ENCODE measurements at regions of chr5 and their contacts with region 1.

Region 1: DNA sequence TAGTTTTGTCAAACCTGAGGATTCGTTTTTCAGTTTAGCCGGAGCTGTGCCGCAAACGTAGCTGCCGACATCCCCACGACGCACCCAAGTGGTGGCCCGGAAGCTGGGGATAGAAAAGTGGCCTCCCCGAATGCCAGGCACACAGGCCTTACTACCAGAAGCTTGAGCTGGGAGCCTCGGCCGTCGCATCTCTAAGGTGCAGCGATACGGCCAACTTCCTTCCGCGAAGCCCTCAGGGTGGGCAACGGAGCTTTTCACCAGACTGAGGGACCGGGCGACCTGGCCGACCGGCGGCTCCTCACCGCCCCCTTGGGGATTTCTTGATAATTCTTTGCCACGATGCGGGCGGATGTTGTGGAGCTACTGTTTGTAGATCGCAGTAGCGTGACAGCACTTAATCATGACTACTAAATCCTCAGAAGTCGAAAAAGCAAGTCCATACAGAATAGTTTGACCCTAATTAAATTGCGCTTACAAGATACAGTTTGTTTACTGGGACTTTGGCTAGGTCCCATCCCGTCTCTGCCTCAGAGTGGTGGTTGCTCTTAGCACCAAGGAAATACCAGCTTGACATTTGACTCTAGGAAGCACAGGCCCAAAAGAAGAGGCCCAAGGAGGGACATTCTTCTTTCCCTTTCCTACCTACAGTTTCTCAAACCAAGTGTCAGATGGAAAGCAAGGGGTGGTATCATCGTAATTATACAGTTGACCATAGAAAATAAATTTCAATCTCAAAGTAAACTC is 613 bp upstream of the TMEM267 start:
- DNase-seq: peak; percentile 70 to 91 (median 83)
- H3K4me3 ChIP-seq: peak overlapping the region; percentile 61
- H3K4me3 Mint-ChIP-seq: peak overlapping the region; percentile 94 to 99 (median 98)
- H3K27ac ChIP-seq: peak overlapping the region; percentile 96
- H3K27ac Mint-ChIP-seq: peak overlapping the region; percentile 99 to 100 (median 100)
- H3K4me1 ChIP-seq: peaks cover 32% of the 10 kb centered on the region
- H3K4me1 Mint-ChIP-seq: peaks cover 31 to 53% (median 50%) of the 10 kb centered on the region in 3 donors
- H3K27me3 ChIP-seq: no peaks in the 10 kb centered on the region
- H3K27me3 Mint-ChIP-seq: no peaks in the 10 kb centered on the region

Region 2: DNA sequence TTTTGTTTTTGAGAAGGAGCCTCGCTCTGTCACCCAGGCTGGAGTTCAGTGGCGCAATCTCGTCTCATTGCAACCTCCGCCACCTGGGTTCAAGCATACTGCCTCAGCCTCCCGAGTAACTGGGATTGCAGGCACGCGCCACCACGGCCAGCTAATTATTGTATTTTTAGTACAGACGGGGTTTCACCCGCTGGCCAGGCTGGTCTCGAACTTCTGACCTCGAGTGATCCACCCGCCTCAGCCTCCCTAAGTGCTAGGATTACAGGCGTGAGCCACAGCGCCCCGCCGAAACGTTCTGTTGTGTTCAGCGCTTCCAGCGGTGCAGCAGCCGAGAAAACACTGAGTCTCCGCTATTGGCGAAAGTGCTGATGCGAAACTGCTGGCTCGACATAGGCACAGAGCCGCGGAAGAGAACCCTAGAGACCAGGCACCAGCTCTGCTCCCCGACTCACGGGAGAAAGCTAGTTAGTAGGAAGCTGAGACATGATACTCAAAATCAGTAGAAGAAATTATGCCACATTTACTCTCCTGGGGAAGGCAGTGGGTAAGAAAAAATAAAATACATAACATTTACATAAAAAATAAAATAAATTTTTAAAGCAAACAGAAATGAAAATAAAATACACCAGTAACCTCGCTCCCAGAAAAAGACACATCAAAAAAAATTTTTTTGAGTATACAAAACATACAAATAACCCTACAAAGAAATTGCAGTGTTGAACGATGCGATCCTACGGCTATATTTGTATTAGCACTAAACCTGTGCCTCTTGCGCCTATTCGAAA is 475.7 kb before region 1 on chr5:
- CTCF ChIA-PET with region 1: interaction called, 5 read pairs
- POLR2A ChIA-PET with region 1: interaction called, 14 read pairs
- DNase-seq: peak; percentile 84 to 95 (median 89)
- H3K4me3 ChIP-seq: peak overlapping the region; percentile 79
- H3K4me3 Mint-ChIP-seq: peak overlapping the region; percentile 85 to 98 (median 93)
- H3K27ac ChIP-seq: peak overlapping the region; percentile 80
- H3K27ac Mint-ChIP-seq: peak overlapping the region; percentile 97 to 100 (median 99)
- H3K4me1 ChIP-seq: peaks cover 26% of the 10 kb centered on the region
- H3K4me1 Mint-ChIP-seq: peaks cover 36 to 40% (median 39%) of the 10 kb centered on the region in 3 donors
- H3K27me3 ChIP-seq: no peaks in the 10 kb centered on the region
- H3K27me3 Mint-ChIP-seq: peaks cover 0 to 6% of the 10 kb centered on the region in 2 donors

Region 3: DNA sequence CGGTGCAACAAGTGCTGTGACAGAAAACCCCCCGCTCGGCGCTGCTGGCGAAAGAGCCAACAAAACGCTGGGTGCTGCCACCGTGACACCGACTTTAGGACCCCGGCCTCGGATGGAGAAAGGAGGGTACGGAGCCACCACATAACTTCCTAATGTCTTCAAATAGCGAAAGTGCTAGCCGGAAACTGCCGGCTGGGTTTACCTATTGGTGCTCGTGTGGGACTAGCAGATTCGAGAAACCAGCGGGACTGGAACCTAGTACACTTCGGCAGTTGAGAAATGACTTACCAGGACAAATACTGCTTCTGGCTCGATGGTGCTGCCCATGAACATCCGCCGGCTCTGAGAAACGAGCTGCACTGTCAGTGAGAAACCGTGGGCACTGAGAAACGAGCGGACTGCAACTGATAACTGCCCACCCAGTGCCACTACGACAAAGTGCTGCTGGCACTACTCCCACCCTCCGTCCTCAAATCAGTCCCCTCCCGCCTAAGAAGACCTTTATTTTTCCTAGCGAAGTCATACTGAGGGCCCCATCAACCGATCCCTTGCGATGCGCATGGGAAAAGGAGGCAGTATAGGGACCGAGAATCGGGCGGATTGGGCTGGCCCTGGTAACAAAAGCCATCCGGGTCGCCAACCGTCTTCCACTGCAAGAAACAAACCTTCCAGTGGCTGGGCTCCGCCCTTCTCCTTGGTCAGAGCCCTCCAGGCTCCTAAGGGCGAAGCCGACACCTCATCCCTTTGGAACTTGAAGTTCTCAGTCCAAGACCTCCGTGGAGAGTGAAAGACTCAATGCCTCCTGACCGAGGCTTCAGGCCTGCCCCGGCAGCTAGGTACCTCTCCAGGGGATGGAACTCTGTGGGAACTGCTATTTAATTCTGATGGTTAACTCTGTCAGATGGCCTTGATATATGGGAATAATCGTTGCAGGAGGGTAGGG is 417.2 kb before region 1 on chr5:
- CTCF ChIA-PET with region 1: no interaction called
- POLR2A ChIA-PET with region 1: interaction called, 13 read pairs
- DNase-seq: peak; percentile 75 to 92 (median 87)
- H3K4me3 ChIP-seq: peak overlapping the region; percentile 99
- H3K4me3 Mint-ChIP-seq: peak overlapping the region; percentile 91 to 99 (median 98)
- H3K27ac ChIP-seq: peak overlapping the region; percentile 99
- H3K27ac Mint-ChIP-seq: peak overlapping the region; percentile 96 to 100 (median 99)
- H3K4me1 ChIP-seq: peaks cover 31% of the 10 kb centered on the region
- H3K4me1 Mint-ChIP-seq: peaks cover 42 to 59% (median 52%) of the 10 kb centered on the region in 3 donors
- H3K27me3 ChIP-seq: no peaks in the 10 kb centered on the region
- H3K27me3 Mint-ChIP-seq: no peaks in the 10 kb centered on the region

Region 4: GRCh38 chr5:43389679-43390329 is 94.5 kb before region 1 on chr5:
- CTCF ChIA-PET with region 1: interaction called, 12 read pairs
- POLR2A ChIA-PET with region 1: interaction called, 12 read pairs
- DNase-seq: peak; percentile 5 to 57 (median 40)
- H3K4me3 ChIP-seq: no peak overlapping the region
- H3K4me3 Mint-ChIP-seq: no peak overlapping the region
- H3K27ac ChIP-seq: no peak overlapping the region
- H3K27ac Mint-ChIP-seq: peak overlapping the region in 4 of 8 donors; percentile 20 to 48 (median 32)
- H3K4me1 ChIP-seq: no peaks in the 10 kb centered on the region
- H3K4me1 Mint-ChIP-seq: peaks cover 16 to 33% (median 29%) of the 10 kb centered on the region in 3 donors
- H3K27me3 ChIP-seq: no peaks in the 10 kb centered on the region
- H3K27me3 Mint-ChIP-seq: peaks cover 0 to 2% of the 10 kb centered on the region in 2 donors

Region 5: GRCh38 chr5:43556857-43557542 is 72.7 kb after region 1 on chr5 and contains the start of gene PAIP1:
- CTCF ChIA-PET with region 1: interaction called, 10 read pairs
- POLR2A ChIA-PET with region 1: interaction called, 49 read pairs
- DNase-seq: peak; percentile 73 to 90 (median 86)
- H3K4me3 ChIP-seq: peak within 1 kb of the TSS; percentile 63
- H3K4me3 Mint-ChIP-seq: peak within 1 kb of the TSS; percentile 91 to 96 (median 95)
- H3K27ac ChIP-seq: peak within 1 kb of the TSS; percentile 81
- H3K27ac Mint-ChIP-seq: peak within 1 kb of the TSS; percentile 97 to 99 (median 98)
- H3K4me1 ChIP-seq: peaks cover 40% of the 10 kb centered on the region
- H3K4me1 Mint-ChIP-seq: peaks cover 10 to 20% (median 12%) of the 10 kb centered on the region in 3 donors
- H3K27me3 ChIP-seq: no peaks in the 10 kb centered on the region
- H3K27me3 Mint-ChIP-seq: peaks cover 1 to 2% of the 10 kb centered on the region in 2 donors
- total RNA-seq, gene PAIP1: 57.2 to 59.3 TPM

Measured in CD8-positive, alpha-beta memory T cell (primary cell).